Tibial artery (tissue), 4 donors: ENCODE measurements at regions of chr19 and their contacts with region 1.

Region 1: DNA sequence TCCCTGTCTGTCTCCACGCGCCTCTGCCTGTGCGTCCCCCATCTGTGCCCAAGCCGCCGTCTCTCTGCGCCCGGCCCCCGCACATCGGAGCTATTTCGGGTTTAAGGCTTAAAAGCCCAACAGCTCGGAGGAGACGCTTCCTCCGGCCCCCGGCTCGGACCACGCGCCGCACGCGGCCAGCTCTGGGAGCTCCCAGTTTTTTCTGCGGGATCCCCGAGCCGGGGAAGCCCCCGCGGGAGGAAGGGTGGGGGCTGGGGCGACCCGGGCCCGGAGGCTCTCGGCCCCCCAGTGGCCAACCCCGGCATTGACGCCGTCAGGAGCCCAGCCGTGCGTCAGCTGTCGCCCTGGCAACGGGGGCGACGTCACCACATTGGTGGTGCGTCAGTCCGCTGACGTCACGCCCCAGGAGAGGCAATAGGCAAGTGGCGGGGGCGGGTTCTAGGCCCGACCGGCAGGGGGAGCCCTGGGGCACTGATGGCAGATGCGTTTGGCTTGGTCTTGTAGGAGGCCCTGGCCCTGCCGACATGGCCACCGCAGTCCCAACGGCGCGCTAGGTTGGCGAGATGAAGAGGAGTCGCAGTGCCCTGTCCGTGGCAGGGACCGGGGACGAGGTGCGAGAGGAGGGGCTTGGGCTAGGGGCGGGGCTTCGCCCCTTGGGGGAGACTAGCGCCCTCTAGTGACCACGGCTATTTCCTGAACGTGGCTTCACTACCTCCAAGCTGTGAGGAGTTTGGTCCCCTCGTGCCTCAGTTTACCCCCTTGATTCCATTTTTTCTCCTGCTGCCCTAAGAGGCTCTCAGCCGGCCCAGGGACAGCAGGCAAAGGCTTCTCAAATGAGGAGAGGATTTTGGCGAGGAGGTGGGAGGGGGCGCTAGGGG is 3.7 kb upstream of the PDE4A start:
- DNase-seq: peak; percentile 66 to 79
- H3K4me3 ChIP-seq: peak overlapping the region; percentile 24 to 34
- H3K27ac ChIP-seq: no peak overlapping the region
- H3K4me1 ChIP-seq: peaks cover 0 to 45% (median 39%) of the 10 kb centered on the region in 4 donors
- H3K27me3 ChIP-seq: peaks cover 0 to 63% of the 10 kb centered on the region in 2 donors
- CTCF ChIP-seq: peak; percentile 56 to 58

Region 2: GRCh38 chr19:10461047-10461790 is 44.6 kb after region 1 on chr19:
- intact Hi-C with region 1: no loop called
- DNase-seq: peak; percentile 91 to 96
- H3K4me3 ChIP-seq: peak overlapping the region; percentile 30 to 49
- H3K27ac ChIP-seq: no peak overlapping the region
- H3K4me1 ChIP-seq: peaks cover 0 to 9% (median 3%) of the 10 kb centered on the region in 4 donors
- H3K27me3 ChIP-seq: no peaks in the 10 kb centered on the region
- CTCF ChIP-seq: no peak

Region 3: DNA sequence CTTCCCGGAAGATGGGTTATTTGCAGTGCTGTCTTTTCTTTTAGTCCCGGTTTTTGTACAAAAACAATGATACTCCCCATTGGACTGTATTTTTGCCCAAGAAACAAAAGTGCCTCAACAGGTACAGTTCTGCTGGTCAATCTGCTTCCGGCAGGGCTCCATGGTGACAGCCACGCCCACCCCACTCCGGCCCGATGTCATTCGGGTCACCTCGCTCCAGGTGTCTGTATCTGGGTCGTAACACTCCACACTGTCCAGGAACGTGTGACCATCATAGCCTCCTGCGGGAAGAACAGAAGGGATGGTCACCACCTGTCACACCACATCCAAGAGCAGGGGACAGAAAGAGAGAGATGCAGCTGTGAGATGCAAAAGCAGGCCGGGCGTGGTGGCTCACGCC is 69.9 kb after region 1 on chr19:
- intact Hi-C with region 1: no loop called
- DNase-seq: no peak
- H3K4me3 ChIP-seq: no peak overlapping the region
- H3K27ac ChIP-seq: no peak overlapping the region
- H3K4me1 ChIP-seq: peaks cover 0 to 8% (median 2%) of the 10 kb centered on the region in 4 donors
- H3K27me3 ChIP-seq: no peaks in the 10 kb centered on the region
- CTCF ChIP-seq: no peak

Region 4: DNA sequence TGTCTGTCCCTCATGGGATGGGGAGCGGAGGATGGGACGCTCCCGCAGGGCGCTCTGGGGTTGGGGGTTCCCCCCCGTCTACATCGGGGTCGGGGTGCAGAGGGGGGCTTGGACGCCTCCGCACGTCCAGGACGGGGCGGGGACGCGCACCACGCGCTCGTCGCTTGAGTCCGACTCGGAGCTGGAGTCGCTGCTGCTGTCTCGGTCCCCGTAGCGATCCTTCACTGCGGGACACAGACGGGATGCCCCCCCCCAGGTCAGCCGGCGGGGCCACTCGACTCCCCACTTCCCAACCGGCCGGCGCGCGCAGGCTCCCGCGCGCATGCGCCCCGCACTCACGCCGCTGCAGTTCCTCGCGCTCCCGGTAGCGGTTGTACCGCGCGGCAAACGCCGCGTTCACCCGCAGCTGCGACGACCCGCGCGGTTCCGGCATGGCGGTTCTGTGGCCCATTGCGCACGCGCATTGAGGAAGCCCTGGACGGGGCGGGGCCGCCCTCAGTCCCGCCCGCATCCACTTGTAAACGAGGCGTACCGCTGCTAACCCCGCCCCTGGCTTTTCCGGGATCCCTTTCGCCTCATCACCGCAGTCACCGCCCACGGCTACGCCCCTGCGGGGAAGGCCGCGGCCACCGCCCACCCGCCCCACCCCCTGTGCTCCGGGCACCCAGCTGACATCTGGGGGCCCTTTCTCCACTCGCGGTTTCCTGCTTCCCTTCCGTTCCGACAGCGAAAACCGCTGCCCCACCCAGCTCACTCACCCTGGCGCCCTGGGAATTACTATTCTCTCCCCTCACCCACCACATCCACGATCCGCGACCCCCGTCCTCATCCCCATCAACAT is 149.2 kb after region 1 on chr19 and contains the start of gene KRI1:
- intact Hi-C with region 1: no loop called
- DNase-seq: peak; percentile 98 to 99
- H3K4me3 ChIP-seq: peak within 1 kb of the TSS; percentile 91 to 94
- H3K27ac ChIP-seq: peak within 1 kb of the TSS; percentile 91 to 92
- H3K4me1 ChIP-seq: peaks cover 0 to 42% (median 32%) of the 10 kb centered on the region in 4 donors
- H3K27me3 ChIP-seq: no peaks in the 10 kb centered on the region
- CTCF ChIP-seq: peak; percentile 13 to 53

Region 5: GRCh38 chr19:10615429-10616023 is 198.9 kb after region 1 on chr19:
- intact Hi-C with region 1: no loop called
- DNase-seq: no peak
- H3K4me3 ChIP-seq: no peak overlapping the region
- H3K27ac ChIP-seq: peak overlapping the region; percentile 61 to 71
- H3K4me1 ChIP-seq: peaks cover 0 to 71% (median 47%) of the 10 kb centered on the region in 4 donors
- H3K27me3 ChIP-seq: no peaks in the 10 kb centered on the region
- CTCF ChIP-seq: no peak

Region 6: DNA sequence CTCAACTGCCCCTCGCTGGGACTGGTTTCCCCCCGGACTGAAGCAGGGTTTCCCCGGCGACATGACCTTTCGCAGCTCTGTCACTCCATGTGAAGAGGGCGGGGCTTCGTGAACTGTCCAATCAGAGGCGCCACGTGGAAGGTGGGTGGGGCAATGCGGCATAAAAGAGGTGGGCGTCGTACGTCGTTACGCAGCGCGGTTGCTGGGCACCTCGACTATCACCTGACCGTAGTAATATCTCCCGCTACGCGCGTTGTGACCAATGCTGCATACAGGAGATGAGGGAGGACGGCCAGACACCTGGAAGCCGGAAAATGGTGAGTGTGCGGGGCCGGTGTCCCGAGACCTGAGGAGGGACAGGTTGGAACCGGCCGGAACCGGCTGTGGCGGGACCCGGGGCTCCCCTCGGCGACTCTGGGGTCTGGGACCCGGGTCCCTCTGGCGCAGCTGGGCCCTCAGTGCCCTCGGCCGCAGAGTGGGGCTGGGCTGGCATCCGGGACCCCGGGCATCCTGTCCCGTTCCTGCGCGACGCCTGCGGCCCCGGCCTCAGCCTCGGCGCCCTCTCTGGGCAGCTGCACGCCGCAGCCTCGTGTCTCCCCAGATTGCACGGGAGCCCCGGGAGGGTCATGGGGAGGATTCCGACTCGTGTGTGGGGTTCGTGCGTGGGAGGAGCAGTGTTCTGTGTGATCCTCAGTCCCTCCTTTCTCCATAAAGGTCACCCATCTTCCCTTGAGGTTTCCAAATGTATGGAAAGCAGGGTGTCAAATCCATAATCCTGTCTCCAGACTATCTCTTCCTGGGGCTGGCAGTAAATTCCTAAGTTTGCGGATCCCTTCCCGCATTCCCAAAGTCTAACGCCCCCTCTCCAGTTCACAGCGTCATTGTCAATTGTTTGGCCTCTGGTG is 1778.5 kb after region 1 on chr19:
- intact Hi-C with region 1: loop called (anchors 5 kb)
- DNase-seq: peak; percentile 83 to 89
- H3K4me3 ChIP-seq: peak overlapping the region; percentile 55 to 67
- H3K27ac ChIP-seq: peak overlapping the region; percentile 62 to 68
- H3K4me1 ChIP-seq: peaks cover 0 to 8% (median 2%) of the 10 kb centered on the region in 4 donors
- H3K27me3 ChIP-seq: no peaks in the 10 kb centered on the region
- CTCF ChIP-seq: no peak